Sigmoid colon (tissue), 7 donors: ENCODE measurements at regions of chr5 and their contacts with region 1.

Region 1: DNA sequence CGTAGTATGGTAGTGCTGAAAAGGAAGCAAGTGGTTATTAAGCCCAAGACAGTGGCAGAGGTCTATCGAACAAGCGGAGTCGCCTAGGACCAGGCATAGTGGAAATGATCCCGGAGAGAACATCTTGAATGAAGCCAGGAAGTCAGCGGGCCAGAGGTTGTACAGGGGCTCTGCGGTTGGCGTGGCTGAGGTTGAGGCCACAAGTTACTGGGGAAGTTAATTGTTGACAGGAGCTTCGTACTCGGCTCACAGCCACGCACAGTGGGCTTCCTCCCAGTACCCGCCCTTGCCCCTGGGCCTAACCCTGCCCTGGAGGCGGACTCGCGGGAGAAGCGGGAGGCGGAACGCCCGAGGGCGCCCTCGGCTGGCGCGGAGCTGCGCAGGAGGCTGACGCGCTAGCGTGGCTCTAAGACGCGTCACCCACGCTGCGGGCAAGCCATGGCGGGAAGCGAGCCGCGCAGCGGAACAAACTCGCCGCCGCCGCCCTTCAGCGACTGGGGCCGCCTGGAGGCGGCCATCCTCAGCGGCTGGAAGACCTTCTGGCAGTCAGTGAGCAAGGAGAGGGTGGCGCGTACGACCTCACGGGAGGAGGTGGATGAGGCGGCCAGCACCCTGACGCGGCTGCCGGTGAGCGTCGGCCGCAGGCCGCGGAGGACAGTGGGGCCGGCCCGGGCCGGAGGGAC is at the start of gene FBXO4:
- DNase-seq: peak; percentile 92
- H3K4me3 ChIP-seq: peak within 1 kb of the TSS; percentile 61 to 85 (median 75)
- H3K27ac ChIP-seq: peak within 1 kb of the TSS; percentile 87 to 98 (median 92)
- H3K4me1 ChIP-seq: peaks cover 0 to 14% (median 6%) of the 10 kb centered on the region in 4 donors
- H3K27me3 ChIP-seq: no peaks in the 10 kb centered on the region
- CTCF ChIP-seq: peak in 2 of 4 experiments; percentile 11 to 61
- EP300 ChIP-seq: peak in 1 of 4 donors; percentile 3
- POLR2A ChIP-seq: peak; percentile 21 to 24
- total RNA-seq, gene FBXO4: 8.3 to 12.3 (median 10.4) TPM

Region 2: DNA sequence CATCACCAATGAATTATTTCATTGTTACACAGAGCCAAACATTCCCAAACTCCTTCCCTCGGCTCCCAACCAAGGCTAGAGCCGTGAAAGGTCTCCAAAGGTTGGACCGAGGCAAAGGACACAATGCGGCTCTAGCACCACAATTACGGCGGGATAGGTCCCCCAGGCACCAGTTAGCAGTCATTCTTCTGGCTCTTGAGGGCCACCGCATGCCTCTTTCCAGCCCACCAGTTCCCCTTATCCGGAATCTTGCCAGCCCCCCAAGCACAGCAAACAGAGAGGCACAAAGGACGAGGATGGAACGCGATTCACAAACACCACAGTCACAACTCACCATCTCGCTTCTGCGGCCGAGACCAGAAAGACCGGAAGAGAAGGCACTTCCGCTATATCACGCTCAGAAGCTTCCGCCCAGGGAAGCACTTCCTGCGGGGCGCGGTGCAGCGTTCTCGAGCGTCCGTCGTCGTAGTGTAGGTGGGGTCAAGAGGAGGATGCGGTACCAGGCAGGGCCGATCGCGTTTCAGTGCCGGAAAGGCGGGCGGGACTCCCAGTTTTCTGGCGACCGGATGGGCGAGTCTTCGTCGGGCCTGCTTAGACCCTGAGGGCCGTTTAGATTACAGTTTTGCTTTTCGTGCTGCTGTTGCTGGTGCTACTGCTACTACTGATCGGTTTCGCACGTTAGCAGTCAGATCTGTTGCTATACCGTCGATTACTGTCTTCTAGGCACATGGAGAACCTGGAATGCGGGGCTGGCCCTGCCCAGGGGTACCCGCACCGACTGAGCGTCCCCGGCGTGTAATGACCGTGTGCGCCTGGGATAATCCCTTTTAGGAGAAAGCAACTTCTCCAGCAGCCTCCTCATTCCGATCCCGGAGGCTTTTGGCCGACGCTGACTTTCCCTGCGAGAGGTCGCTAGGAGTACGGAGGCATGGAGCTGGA is 1089.9 kb before region 1 on chr5 and contains the start of gene RPL37:
- intact Hi-C with region 1: loop called (anchors 10 kb)
- DNase-seq: peak; percentile 98
- H3K4me3 ChIP-seq: peak within 1 kb of the TSS; percentile 50 to 75 (median 58)
- H3K27ac ChIP-seq: peak within 1 kb of the TSS; percentile 88 to 97 (median 95)
- H3K4me1 ChIP-seq: peaks cover 0 to 34% (median 16%) of the 10 kb centered on the region in 4 donors
- H3K27me3 ChIP-seq: no peaks in the 10 kb centered on the region
- CTCF ChIP-seq: no peak
- EP300 ChIP-seq: peak in 1 of 4 donors; percentile 25
- POLR2A ChIP-seq: peak; percentile 78 to 82
- total RNA-seq, gene RPL37: 120 to 170 (median 149) TPM

Region 3: DNA sequence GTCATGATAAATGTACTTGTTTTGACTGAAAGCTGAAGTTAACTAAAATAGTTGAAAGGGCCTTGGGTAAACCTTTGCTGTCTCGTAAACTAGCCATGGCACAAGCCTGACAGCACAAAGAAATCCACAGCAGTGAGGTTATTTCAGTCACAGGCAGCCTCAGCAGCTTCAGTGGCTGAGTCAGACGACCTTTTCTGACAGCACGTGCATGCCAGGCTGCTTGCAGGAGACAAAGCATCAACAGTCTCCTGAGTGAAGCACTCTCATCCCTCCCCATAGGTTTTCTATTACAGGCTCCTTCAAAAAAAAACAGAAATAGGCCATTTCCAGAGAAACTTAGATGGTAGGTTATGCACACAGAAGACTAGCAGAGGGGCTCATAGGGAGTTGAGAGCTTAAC is 89.4 kb before region 1 on chr5:
- intact Hi-C with region 1: no loop called
- DNase-seq: peak; percentile 70
- H3K4me3 ChIP-seq: no peak overlapping the region
- H3K27ac ChIP-seq: peak overlapping the region in 3 of 4 donors; percentile 15 to 75 (median 67)
- H3K4me1 ChIP-seq: peaks cover 0 to 33% (median 23%) of the 10 kb centered on the region in 4 donors
- H3K27me3 ChIP-seq: no peaks in the 10 kb centered on the region
- CTCF ChIP-seq: no peak
- EP300 ChIP-seq: peak in 1 of 4 donors; percentile 48
- POLR2A ChIP-seq: no peak

Region 4: GRCh38 chr5:41856644-41857491 is 68.1 kb before region 1 on chr5:
- intact Hi-C with region 1: loop called (anchors 1 kb)
- DNase-seq: no peak
- H3K4me3 ChIP-seq: no peak overlapping the region
- H3K27ac ChIP-seq: no peak overlapping the region
- H3K4me1 ChIP-seq: peaks cover 0 to 3% (median 0%) of the 10 kb centered on the region in 4 donors
- H3K27me3 ChIP-seq: no peaks in the 10 kb centered on the region
- CTCF ChIP-seq: peak; percentile 47 to 75 (median 58)
- EP300 ChIP-seq: no peak
- POLR2A ChIP-seq: no peak

Region 5: DNA sequence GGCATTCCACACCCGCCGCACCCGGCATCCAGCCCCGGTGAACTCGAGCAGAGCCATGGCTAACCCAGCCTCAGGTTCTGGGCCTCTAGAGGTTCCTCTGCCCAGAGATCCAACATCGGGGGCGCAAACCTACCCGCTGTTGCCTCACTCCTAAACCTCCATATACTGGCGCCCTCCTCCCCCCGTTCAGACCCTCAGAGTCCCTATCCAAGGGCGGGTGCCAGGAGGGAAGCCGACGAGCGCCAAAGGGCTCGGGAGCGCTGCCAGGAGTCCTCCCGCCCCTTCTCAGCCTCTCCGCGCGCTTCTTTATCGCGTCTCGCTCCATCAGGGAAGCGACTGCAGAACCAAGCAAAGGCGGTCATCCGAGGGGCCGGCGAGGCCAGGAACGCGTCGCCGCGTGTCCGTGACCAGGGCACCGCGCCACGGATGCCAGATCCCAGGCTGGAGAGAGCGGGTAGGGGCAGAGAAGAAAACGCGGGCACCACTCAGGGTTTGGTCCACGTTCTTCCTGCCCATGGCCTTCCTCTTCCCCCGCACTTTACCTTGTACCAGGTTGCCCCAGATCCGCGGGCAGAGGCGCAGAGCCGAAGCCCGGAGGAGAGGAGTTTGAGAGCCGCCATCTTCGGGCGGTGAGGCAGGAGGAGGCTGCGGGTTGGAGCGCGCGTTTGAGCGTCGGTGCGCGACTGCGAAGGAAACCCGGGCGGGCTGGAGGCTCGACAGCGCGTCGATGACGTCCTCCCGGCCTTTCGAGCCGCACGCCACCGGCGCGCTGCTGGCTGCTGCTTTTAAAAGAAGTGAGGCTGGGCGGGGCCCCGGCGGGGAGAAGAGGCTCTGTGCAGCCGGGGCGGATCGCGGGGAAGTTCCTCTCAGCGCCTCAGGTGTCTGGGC is 55.0 kb before region 1 on chr5 and contains the start of gene OXCT1:
- intact Hi-C with region 1: loop called (anchors 2 kb)
- DNase-seq: peak; percentile 93
- H3K4me3 ChIP-seq: peak within 1 kb of the TSS; percentile 65 to 83 (median 80)
- H3K27ac ChIP-seq: peak within 1 kb of the TSS; percentile 93 to 98 (median 94)
- H3K4me1 ChIP-seq: peaks cover 0 to 33% (median 20%) of the 10 kb centered on the region in 4 donors
- H3K27me3 ChIP-seq: no peaks in the 10 kb centered on the region
- CTCF ChIP-seq: no peak
- EP300 ChIP-seq: peak in 1 of 4 donors; percentile 19
- POLR2A ChIP-seq: peak; percentile 69 to 86
- total RNA-seq, gene OXCT1: 24.2 to 35.0 (median 33.2) TPM

Region 6: GRCh38 chr5:41903892-41904799 is 20.9 kb before region 1 on chr5 and contains the start of gene RIMOC1:
- intact Hi-C with region 1: loop called (anchors 1 kb)
- DNase-seq: peak; percentile 100
- H3K4me3 ChIP-seq: peak within 1 kb of the TSS; percentile 56 to 81 (median 77)
- H3K27ac ChIP-seq: peak within 1 kb of the TSS; percentile 86 to 95 (median 92)
- H3K4me1 ChIP-seq: peaks cover 0 to 47% (median 18%) of the 10 kb centered on the region in 4 donors
- H3K27me3 ChIP-seq: no peaks in the 10 kb centered on the region
- CTCF ChIP-seq: no peak
- EP300 ChIP-seq: peak in 2 of 4 donors; percentile 51 to 65
- POLR2A ChIP-seq: peak; percentile 87 to 90
- total RNA-seq, gene RIMOC1: 14.9 to 19.3 (median 17.9) TPM

Region 7: DNA sequence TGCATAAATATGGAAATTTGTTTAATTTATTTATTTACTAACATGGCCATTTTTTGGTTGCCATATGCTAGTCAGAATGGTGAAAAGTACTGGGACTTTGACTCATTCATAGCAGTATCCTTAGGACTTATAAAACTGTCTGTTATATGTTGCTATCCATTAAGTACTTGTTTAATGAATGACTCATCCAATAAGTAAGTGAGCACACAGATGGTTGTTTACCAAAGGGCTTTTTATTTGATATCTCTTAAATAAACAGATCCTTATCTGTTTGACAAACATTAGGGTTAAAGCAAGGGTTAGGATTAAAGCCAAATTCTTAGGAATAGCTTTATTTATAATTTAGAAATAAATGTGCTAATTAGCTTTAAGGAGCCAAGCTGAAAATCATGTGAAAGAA is 183.5 kb after region 1 on chr5:
- intact Hi-C with region 1: no loop called
- DNase-seq: no peak
- H3K4me3 ChIP-seq: no peak overlapping the region
- H3K27ac ChIP-seq: no peak overlapping the region
- H3K4me1 ChIP-seq: no peaks in the 10 kb centered on the region
- H3K27me3 ChIP-seq: no peaks in the 10 kb centered on the region
- CTCF ChIP-seq: no peak
- EP300 ChIP-seq: no peak
- POLR2A ChIP-seq: no peak

Region 8: GRCh38 chr5:42767491-42768105 is 842.6 kb after region 1 on chr5:
- intact Hi-C with region 1: loop called (anchors 10 kb)
- DNase-seq: no peak
- H3K4me3 ChIP-seq: no peak overlapping the region
- H3K27ac ChIP-seq: no peak overlapping the region
- H3K4me1 ChIP-seq: no peaks in the 10 kb centered on the region
- H3K27me3 ChIP-seq: no peaks in the 10 kb centered on the region
- CTCF ChIP-seq: peak in 2 of 4 experiments; percentile 16 to 49
- EP300 ChIP-seq: no peak
- POLR2A ChIP-seq: no peak